A673 (cell line): ENCODE measurements at regions of chr20 and their contacts with region 1.

Region 1: DNA sequence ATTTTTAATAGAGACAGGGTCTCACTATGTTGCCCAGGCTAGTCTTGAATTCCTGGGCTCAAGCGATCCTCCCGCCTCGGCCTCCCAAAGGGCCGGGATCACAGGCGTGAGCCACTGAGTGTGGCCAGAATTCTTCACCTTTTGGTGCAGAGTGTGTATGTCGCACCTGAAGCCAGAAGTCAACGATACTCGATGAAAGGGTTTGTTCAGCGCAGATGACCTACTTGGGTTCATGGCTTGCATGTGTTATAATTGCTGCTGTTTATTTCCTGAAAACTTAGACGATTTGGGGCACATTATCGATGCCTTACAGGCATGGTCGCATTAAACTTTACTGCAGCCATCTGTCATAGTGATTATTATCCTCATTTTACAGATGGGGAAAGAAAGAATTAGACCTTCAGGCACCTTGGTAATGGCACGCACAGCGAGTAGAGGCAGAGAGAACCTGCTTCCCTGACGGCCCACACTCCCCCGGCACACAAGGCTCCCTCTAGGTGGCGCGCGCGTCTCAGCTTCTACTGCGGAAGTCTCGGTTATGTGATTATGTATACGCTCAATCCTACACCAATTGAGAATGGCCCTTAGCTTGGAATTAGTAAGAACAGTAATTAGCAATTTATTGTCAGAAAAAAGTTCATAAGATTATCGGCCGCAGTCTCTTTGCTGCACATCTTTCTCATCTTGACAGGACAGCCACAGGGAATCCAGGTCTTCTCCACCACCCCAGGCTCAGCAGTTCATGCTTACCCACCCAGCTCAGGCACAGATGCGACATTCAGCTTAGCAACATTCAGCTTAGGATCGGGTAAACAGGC is 212.8 kb upstream of the PROKR2 start:
- DNase-seq: peak; percentile 88
- H3K4me3 ChIP-seq: peak overlapping the region; percentile 5
- H3K27ac ChIP-seq: no peak overlapping the region
- H3K4me1 ChIP-seq: no peaks in the 10 kb centered on the region
- H3K27me3 ChIP-seq: peaks cover 3% of the 10 kb centered on the region
- CTCF ChIP-seq: peak; percentile 98

Region 2: GRCh38 chr20:5691918-5692618 is 162.5 kb after region 1 on chr20:
- CTCF ChIA-PET with region 1: no interaction called
- POLR2A ChIA-PET with region 1: no interaction called
- intact Hi-C with region 1: no loop called
- DNase-seq: no peak
- H3K4me3 ChIP-seq: no peak overlapping the region
- H3K27ac ChIP-seq: no peak overlapping the region
- H3K4me1 ChIP-seq: no peaks in the 10 kb centered on the region
- H3K27me3 ChIP-seq: no peaks in the 10 kb centered on the region
- CTCF ChIP-seq: no peak

Region 3: DNA sequence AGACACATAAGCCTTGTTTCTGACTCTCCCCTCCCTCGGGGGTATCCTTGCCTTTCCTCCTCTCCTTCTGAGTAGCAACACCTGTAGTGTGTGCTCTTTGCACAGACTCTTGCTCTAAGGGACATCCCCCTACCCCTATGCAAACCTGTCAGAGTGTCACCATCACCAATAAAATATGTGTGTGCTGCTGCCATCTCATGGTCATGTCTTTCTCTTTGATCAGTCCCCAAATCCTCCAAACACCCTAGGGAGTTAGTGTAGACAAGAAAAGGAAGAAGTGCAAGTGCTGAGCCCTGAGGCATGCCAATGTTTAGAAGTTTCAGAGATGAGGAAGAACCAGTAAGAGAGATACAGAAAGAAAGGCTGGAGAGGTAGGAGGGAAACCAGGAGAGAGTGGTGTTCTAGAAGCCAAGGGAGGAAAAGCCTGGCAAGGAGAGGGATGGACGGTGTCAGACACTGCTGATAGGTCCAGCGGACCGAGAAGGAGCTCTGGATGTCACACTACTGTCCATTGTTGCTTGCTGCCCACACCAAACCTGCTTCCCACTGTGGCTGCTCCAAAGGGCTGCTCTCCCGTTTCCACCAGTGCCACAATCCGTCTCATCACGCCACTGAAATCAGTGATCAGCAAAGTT is 404.4 kb after region 1 on chr20:
- CTCF ChIA-PET with region 1: interaction called, 3 read pairs
- POLR2A ChIA-PET with region 1: no interaction called
- intact Hi-C with region 1: loop called (anchors 5 kb)
- DNase-seq: peak; percentile 56
- H3K4me3 ChIP-seq: no peak overlapping the region
- H3K27ac ChIP-seq: no peak overlapping the region
- H3K4me1 ChIP-seq: no peaks in the 10 kb centered on the region
- H3K27me3 ChIP-seq: no peaks in the 10 kb centered on the region
- CTCF ChIP-seq: peak; percentile 48; the same call in 1 of the 2 replicates

Region 4: GRCh38 chr20:6074145-6074561 is 544.6 kb after region 1 on chr20:
- CTCF ChIA-PET with region 1: interaction called, 7 read pairs
- POLR2A ChIA-PET with region 1: no interaction called
- intact Hi-C with region 1: loop called (anchors 1 kb)
- DNase-seq: peak; percentile 26
- H3K4me3 ChIP-seq: no peak overlapping the region
- H3K27ac ChIP-seq: no peak overlapping the region
- H3K4me1 ChIP-seq: peaks cover 7% of the 10 kb centered on the region
- H3K27me3 ChIP-seq: no peaks in the 10 kb centered on the region
- CTCF ChIP-seq: peak; percentile 45